Mucosa of descending colon (tissue), 3 donors: ENCODE measurements at regions of chr6 and their contacts with region 1.

Region 1: DNA sequence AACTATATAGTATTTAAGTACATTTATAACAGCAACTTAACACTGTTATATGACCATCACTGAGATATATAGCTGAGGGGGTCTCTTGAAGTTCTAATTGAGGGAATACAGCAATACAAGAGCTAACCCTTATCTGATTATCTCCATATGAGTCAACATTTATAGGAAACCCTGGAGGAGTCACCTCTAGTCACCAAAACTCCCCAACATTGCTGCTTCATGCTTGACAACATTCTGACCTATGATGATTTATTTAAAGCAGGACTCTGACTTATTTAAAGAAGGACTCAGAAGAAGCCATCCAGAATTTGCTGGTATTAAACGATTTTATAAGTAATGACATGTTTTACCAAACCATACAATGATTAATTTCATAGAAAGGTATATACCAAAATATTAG is 182.6 kb upstream of the NOX3 start:
- DNase-seq: no peak
- ATAC-seq: no peak
- H3K4me3 ChIP-seq: no peak overlapping the region
- H3K4me1 ChIP-seq: no peaks in the 10 kb centered on the region
- CTCF ChIP-seq: no peak

Region 2: DNA sequence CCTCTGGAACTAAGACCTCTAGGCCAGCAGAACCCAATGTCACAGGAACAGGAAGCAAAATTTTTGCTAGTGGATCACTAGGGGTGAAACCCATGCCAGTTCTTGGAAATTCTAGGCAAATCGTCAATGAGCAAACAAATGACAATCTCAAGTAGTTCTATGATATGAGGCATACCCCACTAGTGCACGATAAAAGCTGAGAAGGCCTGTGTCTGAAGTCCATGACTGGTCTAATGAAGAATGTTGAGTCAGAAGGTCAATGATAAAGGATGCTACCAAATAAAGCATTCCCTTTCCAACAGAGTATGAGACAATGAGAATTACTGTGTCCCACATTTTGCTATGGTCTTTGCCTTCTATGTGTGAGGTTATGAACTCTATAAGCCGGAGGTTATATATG is 33.2 kb before region 1 on chr6:
- intact Hi-C with region 1: loop called in 1 of 2 experiments (anchors 5 kb)
- DNase-seq: no peak
- ATAC-seq: no peak
- H3K4me3 ChIP-seq: no peak overlapping the region
- H3K4me1 ChIP-seq: no peaks in the 10 kb centered on the region
- CTCF ChIP-seq: no peak

Region 3: GRCh38 chr6:155847711-155848110 is 209.5 kb after region 1 on chr6:
- intact Hi-C with region 1: no loop called
- DNase-seq: no peak
- ATAC-seq: no peak
- H3K4me3 ChIP-seq: no peak overlapping the region
- H3K4me1 ChIP-seq: no peaks in the 10 kb centered on the region
- CTCF ChIP-seq: no peak

Region 4: GRCh38 chr6:156279261-156279969 is 641.2 kb after region 1 on chr6:
- intact Hi-C with region 1: no loop called
- DNase-seq: no peak
- ATAC-seq: peak; percentile 47
- H3K4me3 ChIP-seq: no peak overlapping the region
- H3K4me1 ChIP-seq: no peaks in the 10 kb centered on the region
- CTCF ChIP-seq: no peak